T-cell (primary cell): ENCODE measurements at regions of chr20 and their contacts with region 1.

Region 1: DNA sequence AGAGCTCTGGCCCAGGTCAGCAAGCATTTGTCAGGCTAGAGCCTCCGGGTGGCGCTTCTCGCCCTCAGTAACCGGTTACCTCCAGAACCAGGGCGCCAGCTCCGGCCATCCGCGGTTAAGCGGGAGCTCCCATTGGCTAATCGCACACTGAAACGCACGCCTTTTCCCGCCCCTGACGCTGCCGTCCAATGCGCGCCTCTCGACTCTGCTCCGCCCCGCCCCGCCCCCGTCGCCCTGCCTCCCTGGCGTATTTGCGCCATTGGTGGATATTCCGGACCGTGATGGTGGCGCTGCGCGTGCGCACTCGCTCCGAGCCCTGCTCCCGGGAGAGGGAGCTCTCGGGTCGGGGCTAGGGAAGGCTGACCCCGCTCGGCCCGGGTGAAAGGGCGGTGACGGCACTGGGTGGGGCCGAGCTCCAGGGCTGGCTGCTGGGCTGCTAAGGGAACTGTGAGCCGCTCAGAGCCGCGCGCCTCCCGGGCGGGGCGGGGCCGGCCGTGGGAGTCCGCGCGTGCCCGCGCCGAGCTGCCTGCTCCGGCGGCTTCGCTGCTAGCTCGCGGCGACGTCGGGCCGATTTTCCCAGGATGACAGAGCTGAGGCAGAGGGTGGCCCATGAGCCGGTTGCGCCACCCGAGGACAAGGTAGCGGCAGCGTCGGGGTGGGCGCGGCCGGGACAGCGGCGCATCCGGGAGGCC is at the start of gene CDS2:
- DNase-seq: peak; percentile 98 to 100 (median 100)
- ATAC-seq: peak; percentile 87 to 89 (median 87)
- H3K4me3 ChIP-seq: peak within 1 kb of the TSS; percentile 77 to 86
- H3K4me3 Mint-ChIP-seq: peak within 1 kb of the TSS; percentile 90 to 94 (median 93)
- H3K27ac ChIP-seq: peak within 1 kb of the TSS; percentile 99
- H3K27ac Mint-ChIP-seq: peak within 1 kb of the TSS; percentile 95
- H3K4me1 ChIP-seq: peaks cover 18 to 28% of the 10 kb centered on the region in 2 experiments
- H3K4me1 Mint-ChIP-seq: peaks cover 34 to 36% (median 35%) of the 10 kb centered on the region in 3 donors
- H3K27me3 ChIP-seq: no peaks in the 10 kb centered on the region
- H3K27me3 Mint-ChIP-seq: no peaks in the 10 kb centered on the region
- total RNA-seq, gene CDS2: 47.1 to 62.2 (median 48.9) TPM

Region 2: GRCh38 chr20:4470375-4470774 is 656.3 kb before region 1 on chr20:
- CTCF ChIA-PET with region 1: no interaction called
- POLR2A ChIA-PET with region 1: no interaction called
- DNase-seq: no peak
- ATAC-seq: no peak
- H3K4me3 ChIP-seq: no peak overlapping the region
- H3K4me3 Mint-ChIP-seq: no peak overlapping the region
- H3K27ac ChIP-seq: no peak overlapping the region
- H3K27ac Mint-ChIP-seq: no peak overlapping the region
- H3K4me1 ChIP-seq: no peaks in the 10 kb centered on the region
- H3K4me1 Mint-ChIP-seq: no peaks in the 10 kb centered on the region
- H3K27me3 ChIP-seq: peaks cover 0 to 2% of the 10 kb centered on the region in 2 experiments
- H3K27me3 Mint-ChIP-seq: peaks cover 18 to 23% of the 10 kb centered on the region in 2 donors

Region 3: GRCh38 chr20:4813863-4814695 is 312.6 kb before region 1 on chr20:
- CTCF ChIA-PET with region 1: interaction called in 1 of 2 experiments, 4 read pairs
- POLR2A ChIA-PET with region 1: interaction called, 3 to 13 read pairs
- DNase-seq: peak in 34 of 35 experiments; percentile 44 to 93 (median 67)
- ATAC-seq: peak; percentile 72 to 78 (median 76)
- H3K4me3 ChIP-seq: peak overlapping the region; percentile 58 to 62
- H3K4me3 Mint-ChIP-seq: peak overlapping the region; percentile 81 to 87 (median 83)
- H3K27ac ChIP-seq: peak overlapping the region; percentile 99
- H3K27ac Mint-ChIP-seq: peak overlapping the region; percentile 97 to 98
- H3K4me1 ChIP-seq: peaks cover 55 to 72% of the 10 kb centered on the region in 2 experiments
- H3K4me1 Mint-ChIP-seq: peaks cover 84 to 87% (median 87%) of the 10 kb centered on the region in 3 donors
- H3K27me3 ChIP-seq: no peaks in the 10 kb centered on the region
- H3K27me3 Mint-ChIP-seq: no peaks in the 10 kb centered on the region

Region 4: GRCh38 chr20:5191829-5192569 is 65.3 kb after region 1 on chr20:
- CTCF ChIA-PET with region 1: interaction called, 9 to 46 read pairs
- POLR2A ChIA-PET with region 1: interaction called in 1 of 2 experiments, 4 read pairs
- DNase-seq: peak in 27 of 35 experiments; percentile 5 to 78 (median 22)
- ATAC-seq: peak; percentile 59 to 79 (median 71)
- H3K4me3 ChIP-seq: no peak overlapping the region
- H3K4me3 Mint-ChIP-seq: no peak overlapping the region
- H3K27ac ChIP-seq: peak overlapping the region; percentile 13
- H3K27ac Mint-ChIP-seq: peak overlapping the region; percentile 79 to 80
- H3K4me1 ChIP-seq: no peaks in the 10 kb centered on the region
- H3K4me1 Mint-ChIP-seq: peaks cover 2 to 6% (median 6%) of the 10 kb centered on the region in 3 donors
- H3K27me3 ChIP-seq: no peaks in the 10 kb centered on the region
- H3K27me3 Mint-ChIP-seq: no peaks in the 10 kb centered on the region